Ascending aorta (tissue), 2 donors: ENCODE measurements at regions of chr10 and their contacts with region 1.

Region 1: DNA sequence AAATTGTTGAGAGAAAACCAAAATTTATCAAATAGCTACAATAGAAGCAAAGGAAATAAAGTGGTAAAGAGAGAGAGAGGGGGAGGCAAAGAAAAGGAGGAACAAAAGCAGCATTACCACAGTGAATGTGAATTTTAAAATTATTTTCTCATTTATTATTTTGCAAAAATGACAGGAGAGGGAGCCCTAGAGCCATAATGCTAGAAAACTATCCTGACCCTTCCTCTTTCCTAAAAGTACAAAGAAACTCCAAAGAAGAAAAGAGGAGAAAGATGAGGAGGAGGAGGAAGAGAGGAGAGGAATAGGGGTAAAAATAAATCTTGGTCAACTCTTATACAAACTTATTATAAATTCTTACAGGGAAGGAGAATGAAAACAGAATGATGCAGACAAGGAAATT is 921.5 kb downstream of the NRG3 start:
- DNase-seq: no peak
- H3K4me3 ChIP-seq: no peak overlapping the region
- H3K27ac ChIP-seq: no peak overlapping the region
- H3K4me1 ChIP-seq: no peaks in the 10 kb centered on the region
- H3K27me3 ChIP-seq: no peaks in the 10 kb centered on the region
- CTCF ChIP-seq: peak in 2 of 3 experiments; percentile 23 to 48

Region 2: DNA sequence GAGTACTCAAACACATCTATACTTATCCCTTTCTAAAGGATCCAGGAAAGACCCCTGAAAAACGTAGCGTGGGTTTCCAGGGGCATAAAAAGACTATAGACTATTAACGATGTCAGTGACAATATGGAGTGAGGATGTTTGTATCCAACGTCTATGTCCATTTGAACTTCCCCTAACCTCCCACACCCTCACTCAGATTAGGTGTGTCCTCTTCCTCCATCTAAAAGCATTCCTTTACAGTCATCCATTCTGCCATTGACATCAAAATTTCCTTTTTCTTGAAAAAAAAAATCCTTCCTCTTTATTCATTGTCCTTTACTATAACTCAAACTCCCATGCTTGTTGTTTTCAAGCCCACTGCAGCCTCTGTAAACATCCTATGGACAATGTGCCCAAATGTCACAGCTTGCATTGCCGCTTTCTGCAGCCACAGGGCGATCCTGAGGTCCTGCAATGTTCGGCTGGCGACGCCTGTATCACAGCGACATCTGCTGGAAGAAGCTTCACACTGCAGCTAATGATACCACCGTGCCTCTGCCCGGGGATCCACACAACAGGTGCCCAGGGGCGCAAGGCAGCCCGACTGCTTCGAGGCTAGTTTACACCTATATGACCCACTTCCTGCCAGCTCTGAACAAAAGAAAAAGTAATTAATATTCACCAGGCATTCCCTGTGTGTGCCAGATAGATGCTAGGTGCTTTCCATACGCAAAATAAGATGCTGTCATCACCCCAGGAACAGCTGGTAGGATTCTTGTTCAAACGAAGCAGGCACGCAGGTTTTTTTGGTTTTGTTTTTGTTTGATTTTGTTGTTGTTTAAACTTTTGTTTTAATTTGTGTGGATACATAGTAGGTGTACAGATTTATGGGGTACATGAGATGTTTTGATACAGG is 1074.9 kb after region 1 on chr10:
- intact Hi-C with region 1: loop called (anchors 5 kb)
- DNase-seq: peak in 1 of 2 donors; percentile 75
- H3K4me3 ChIP-seq: no peak overlapping the region
- H3K27ac ChIP-seq: no peak overlapping the region
- H3K4me1 ChIP-seq: no peaks in the 10 kb centered on the region
- H3K27me3 ChIP-seq: no peaks in the 10 kb centered on the region
- CTCF ChIP-seq: peak; percentile 29 to 80 (median 73)